Ascending aorta (tissue), 2 donors: ENCODE measurements at regions of chr5 and their contacts with region 1.

Region 1: GRCh38 chr5:90438100-90438499 is 28.5 kb upstream of the CETN3 start:
- DNase-seq: no peak
- H3K4me3 ChIP-seq: no peak overlapping the region
- H3K27ac ChIP-seq: no peak overlapping the region
- H3K4me1 ChIP-seq: no peaks in the 10 kb centered on the region
- H3K27me3 ChIP-seq: no peaks in the 10 kb centered on the region
- CTCF ChIP-seq: no peak

Region 2: DNA sequence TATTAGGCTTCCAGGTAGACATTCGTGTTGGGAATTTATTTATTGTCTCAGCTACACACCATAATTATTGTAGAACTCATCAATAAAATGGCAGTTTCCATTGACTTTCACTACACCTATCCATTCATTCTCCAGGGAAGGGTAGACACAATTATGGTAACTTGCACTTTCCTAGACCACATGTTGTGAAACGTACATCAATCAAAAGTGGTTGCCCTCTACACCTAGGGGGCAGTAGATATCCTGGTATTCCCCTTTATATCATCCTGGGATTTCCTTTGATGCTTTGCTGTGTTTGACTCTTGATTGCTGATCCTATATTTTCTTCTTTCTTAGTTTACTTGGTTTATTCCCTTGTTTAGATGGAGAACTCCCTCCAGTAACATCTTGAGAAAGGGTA is 168.4 kb after region 1 on chr5:
- intact Hi-C with region 1: loop called (anchors 2 kb)
- DNase-seq: no peak
- H3K4me3 ChIP-seq: no peak overlapping the region
- H3K27ac ChIP-seq: no peak overlapping the region
- H3K4me1 ChIP-seq: no peaks in the 10 kb centered on the region
- H3K27me3 ChIP-seq: no peaks in the 10 kb centered on the region
- CTCF ChIP-seq: no peak

Region 3: GRCh38 chr5:90783460-90784333 is 345.6 kb after region 1 on chr5:
- intact Hi-C with region 1: loop called (anchors 2 kb)
- DNase-seq: peak in 1 of 2 donors; percentile 71
- H3K4me3 ChIP-seq: no peak overlapping the region
- H3K27ac ChIP-seq: no peak overlapping the region
- H3K4me1 ChIP-seq: no peaks in the 10 kb centered on the region
- H3K27me3 ChIP-seq: no peaks in the 10 kb centered on the region
- CTCF ChIP-seq: peak; percentile 47 to 81 (median 80)